ENCODE measurements at regions of chr6 and their contacts with region 1.

Region 1: DNA sequence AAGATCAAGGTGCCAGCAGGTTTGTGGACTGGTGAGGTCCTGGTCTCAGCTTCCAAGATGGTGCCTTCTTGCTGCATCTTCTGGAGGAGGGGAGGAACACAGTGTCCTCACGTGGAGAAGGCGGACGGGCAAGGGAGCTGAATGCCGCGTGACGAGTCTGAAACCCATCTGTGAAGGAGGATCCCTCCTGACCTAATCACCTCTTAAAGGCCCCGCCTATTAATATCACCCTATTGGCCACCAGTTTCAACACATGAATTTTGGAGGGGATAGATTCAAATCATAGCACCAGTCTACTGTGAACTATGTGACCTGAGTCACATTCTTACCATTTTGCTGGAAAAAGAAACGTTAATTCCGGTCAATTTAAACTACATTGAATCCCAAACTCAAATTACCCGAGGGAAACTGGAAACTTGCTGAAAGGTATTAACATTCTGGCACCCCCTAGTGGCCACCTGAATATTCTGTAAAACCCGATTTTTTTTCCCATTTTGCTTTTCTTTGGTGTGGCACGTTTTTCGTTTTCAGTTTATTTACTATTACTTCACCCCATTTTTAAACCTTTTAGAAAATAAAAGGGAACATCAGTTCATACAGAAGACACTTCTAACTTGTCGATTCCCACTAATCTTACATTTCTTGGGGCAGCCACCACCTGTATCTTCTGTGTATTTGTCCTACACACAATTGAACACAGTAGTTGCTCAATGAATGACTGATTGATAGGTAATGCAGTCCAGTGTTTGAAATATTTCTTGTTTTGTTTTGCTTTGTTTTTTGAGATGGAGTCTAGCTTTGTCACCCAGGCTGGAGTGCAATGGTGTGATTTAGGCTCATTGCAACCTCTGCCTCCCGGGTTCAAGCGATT is 17.9 kb upstream of the CCDC170 start:
- DNase-seq: peak in 1 of 2 donors; percentile 50
- H3K4me3 ChIP-seq: no peak overlapping the region
- H3K27ac ChIP-seq: no peak overlapping the region
- H3K4me1 ChIP-seq: no peaks in the 10 kb centered on the region
- H3K27me3 ChIP-seq: no peaks in the 10 kb centered on the region
- CTCF ChIP-seq: peak; percentile 70 to 84 (median 77)
- POLR2A ChIP-seq: no peak

Region 2: DNA sequence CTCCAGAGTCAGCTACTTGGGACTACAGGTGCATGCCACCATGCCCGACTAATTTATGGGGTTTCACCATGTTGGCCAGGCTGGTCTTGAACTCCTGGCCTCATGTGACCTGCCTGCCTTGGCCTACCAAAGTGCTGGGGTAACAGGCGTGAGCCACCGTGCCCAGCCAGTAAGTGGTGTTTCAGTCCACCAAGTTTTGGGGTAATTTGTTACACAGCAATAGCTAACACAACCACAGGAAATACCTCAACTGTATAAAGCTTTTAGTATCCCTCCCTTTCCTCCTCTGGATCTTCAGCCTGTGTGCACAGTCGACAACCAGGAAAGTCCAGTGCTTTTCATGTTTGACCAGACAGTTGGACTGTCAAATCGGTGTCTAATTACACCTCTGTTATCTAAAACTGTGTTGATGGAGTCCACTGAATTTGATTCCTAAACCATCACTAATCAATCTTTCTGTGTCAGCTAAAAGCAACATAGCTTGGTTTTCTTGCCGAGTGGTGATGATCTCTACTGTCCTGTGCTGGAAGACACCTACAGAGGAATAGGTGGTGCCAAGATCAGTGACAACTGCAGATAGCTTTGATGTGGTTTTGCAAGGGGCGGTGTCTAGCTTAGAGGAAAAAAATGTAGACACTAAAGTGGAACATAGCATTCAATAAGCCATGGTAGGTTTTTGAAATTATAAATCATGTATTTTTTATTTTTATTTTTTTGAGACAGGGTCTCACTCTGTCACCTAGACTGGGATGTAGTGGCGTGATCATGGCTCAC is 62.3 kb before region 1 on chr6:
- intact Hi-C with region 1: loop called (anchors 10 kb)
- DNase-seq: no peak
- H3K4me3 ChIP-seq: no peak overlapping the region
- H3K27ac ChIP-seq: no peak overlapping the region
- H3K4me1 ChIP-seq: no peaks in the 10 kb centered on the region
- H3K27me3 ChIP-seq: no peaks in the 10 kb centered on the region
- CTCF ChIP-seq: no peak
- POLR2A ChIP-seq: no peak